ENCODE measurements at regions of chr10 and their contacts with region 1.

Region 1: DNA sequence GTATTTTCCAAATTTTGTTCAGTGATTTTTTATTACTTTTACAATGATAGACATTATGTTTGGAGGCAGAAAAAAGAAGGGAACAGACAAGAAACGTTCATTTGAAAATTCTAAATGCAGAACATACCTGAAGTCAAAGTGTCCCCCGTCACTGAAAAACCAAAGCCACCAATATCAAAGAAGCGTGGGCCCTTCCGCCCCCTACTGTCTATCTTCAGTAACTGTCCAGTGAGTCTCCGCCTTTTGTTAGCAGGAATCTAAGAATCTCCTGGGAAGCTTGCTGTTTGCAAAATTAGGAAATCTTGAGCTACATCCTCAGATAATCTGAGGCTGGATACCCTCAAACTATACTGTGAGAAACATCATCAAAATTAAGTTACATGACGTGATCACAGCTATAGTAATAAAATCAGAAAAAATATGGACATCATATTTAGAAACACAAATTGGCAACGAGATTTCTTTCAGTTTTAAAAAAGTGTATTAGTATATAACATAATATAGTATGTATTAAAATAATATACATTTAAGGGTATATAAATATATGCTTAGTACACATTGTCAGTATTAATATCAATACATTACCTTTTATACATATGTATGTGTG is 169.3 kb upstream of the AKR1E2 start:
- DNase-seq: peak; percentile 84
- H3K4me3 Mint-ChIP-seq: no peak overlapping the region
- H3K27ac Mint-ChIP-seq: no peak overlapping the region
- H3K4me1 Mint-ChIP-seq: peaks cover 10% of the 10 kb centered on the region
- H3K27me3 Mint-ChIP-seq: peaks cover 18% of the 10 kb centered on the region

Region 2: GRCh38 chr10:3197348-3198003 is 1459.2 kb before region 1 on chr10:
- intact Hi-C with region 1: loop called (anchors 5 kb)
- DNase-seq: peak; percentile 91
- H3K4me3 Mint-ChIP-seq: peak overlapping the region; percentile 67
- H3K27ac Mint-ChIP-seq: peak overlapping the region; percentile 81
- H3K4me1 Mint-ChIP-seq: peaks cover 17% of the 10 kb centered on the region
- H3K27me3 Mint-ChIP-seq: peaks cover 89% of the 10 kb centered on the region

Region 3: DNA sequence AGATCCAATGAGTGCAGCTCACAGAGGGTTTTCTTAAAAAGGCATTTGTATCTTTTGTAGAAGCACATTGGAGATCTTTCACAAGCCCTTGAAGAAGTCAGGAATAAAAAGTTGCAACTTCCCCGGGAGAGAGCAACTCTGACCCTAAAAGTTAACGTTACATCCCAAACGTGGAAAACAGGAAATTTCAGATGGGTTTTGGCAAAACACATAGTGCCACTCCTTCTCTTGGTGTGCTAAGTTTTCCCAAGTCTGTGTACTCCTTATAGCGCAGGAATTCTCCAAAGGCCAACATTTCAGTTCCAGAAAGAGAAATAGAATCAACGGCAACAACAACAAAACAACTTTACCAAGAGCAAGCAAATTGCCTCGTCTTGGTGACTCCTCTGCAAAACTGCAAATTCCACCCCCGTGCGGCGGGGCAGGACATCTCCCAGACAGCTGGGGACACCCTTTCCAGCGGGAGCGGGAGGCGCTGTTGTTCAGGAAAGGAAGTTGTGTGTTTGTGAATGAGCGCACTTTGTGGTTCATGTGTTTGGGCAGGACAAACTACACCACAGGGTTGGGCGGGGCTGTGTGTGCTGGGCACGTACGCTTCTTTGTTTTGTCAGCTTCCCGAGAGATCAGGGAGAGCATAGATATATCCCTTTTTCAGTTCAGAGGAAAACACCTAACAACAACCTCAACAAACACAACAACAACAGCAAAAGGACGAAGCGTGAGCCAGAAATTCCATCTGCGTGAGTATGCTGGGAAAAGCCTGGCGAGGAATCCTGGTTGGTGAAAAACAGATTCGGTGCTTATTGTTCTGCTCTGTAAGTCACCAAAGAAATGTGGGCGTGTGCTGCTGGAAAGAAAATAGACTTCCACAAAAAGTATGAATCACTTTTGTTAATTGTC is 1189.4 kb before region 1 on chr10:
- intact Hi-C with region 1: loop called (anchors 5 kb)
- DNase-seq: peak; percentile 79
- H3K4me3 Mint-ChIP-seq: peak overlapping the region; percentile 82
- H3K27ac Mint-ChIP-seq: peak overlapping the region; percentile 96
- H3K4me1 Mint-ChIP-seq: peaks cover 51% of the 10 kb centered on the region
- H3K27me3 Mint-ChIP-seq: no peaks in the 10 kb centered on the region

Region 4: GRCh38 chr10:3805791-3806461 is 850.8 kb before region 1 on chr10:
- intact Hi-C with region 1: loop called (anchors 1 kb)
- DNase-seq: peak; percentile 87
- H3K4me3 Mint-ChIP-seq: peak overlapping the region; percentile 48
- H3K27ac Mint-ChIP-seq: no peak overlapping the region
- H3K4me1 Mint-ChIP-seq: peaks cover 64% of the 10 kb centered on the region
- H3K27me3 Mint-ChIP-seq: no peaks in the 10 kb centered on the region

Region 5: DNA sequence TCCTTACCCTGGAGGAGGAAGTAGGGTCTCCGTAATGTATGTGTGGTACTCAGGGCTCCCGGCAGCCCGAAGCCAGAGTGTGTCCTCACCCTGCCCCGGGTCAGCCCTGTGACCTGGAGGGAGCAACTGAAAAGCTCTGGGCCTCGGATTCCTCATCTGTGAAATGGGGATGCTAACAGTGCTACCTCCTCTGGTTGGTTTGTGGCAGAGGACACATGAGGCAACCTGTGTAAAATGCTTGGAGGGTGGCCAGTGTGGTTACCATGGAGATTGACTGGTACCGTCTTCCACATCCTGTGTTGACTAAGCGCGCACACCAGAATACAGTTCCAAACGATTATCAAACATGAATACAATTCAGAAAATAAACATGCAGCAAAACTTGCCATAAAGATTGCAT is 707.8 kb before region 1 on chr10:
- intact Hi-C with region 1: loop called (anchors 5 kb)
- DNase-seq: peak; percentile 92
- H3K4me3 Mint-ChIP-seq: peak overlapping the region; percentile 50
- H3K27ac Mint-ChIP-seq: peak overlapping the region; percentile 90
- H3K4me1 Mint-ChIP-seq: peaks cover 49% of the 10 kb centered on the region
- H3K27me3 Mint-ChIP-seq: no peaks in the 10 kb centered on the region

Region 6: DNA sequence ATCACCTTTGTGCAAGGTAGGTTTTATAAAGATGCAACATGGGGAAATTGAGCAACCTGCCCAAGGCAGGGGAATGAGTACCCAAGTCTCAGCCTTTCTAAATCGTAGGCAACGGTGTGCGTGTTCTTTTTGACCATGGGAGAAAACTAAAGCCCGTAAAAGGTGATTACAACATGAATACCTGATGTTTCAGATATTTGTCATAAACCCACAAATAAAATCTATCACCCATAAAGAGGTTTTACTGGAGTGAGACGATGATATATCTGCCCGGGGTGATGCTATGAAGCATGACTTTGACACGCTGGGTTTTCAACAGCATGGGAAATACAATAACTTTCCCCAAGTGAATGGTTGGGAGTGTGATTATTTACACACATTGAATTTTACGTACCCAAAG is 465.3 kb before region 1 on chr10:
- intact Hi-C with region 1: no loop called
- DNase-seq: no peak
- H3K4me3 Mint-ChIP-seq: no peak overlapping the region
- H3K27ac Mint-ChIP-seq: no peak overlapping the region
- H3K4me1 Mint-ChIP-seq: peaks cover 3% of the 10 kb centered on the region
- H3K27me3 Mint-ChIP-seq: no peaks in the 10 kb centered on the region

Region 7: GRCh38 chr10:4546500-4546899 is 110.2 kb before region 1 on chr10:
- intact Hi-C with region 1: loop called (anchors 1 kb)
- DNase-seq: peak; percentile 62
- H3K4me3 Mint-ChIP-seq: no peak overlapping the region
- H3K27ac Mint-ChIP-seq: no peak overlapping the region
- H3K4me1 Mint-ChIP-seq: peaks cover 8% of the 10 kb centered on the region
- H3K27me3 Mint-ChIP-seq: peaks cover 29% of the 10 kb centered on the region

Measured in activated CD4-positive, alpha-beta T cell treated with anti-CD3 and anti-CD28 coated beads, Interleukin-2, amount 10 ng/mL, durations not matched to agents 24 days and 14 days (primary cell).